G401 (cell line): ENCODE measurements at regions of chr10 and their contacts with region 1.

Region 1: DNA sequence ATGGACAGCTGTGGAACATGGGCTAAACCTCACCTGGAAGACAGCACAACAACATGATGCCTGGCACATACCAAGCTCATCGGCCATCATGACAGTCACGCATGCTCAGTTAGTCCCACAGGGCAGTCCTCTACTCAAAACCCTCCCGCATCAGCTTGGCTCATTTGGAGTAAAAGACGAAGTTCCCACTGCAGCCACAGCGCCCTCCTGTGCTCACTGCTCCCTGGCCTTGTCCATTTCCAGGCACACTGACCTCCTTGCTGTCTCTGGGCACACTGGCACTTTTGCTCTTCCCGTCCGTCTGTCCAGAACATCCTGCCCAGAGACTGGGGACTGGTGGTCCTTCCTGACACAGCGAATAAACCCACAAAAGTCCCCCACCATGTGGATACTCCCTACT is 66.2 kb downstream of the LARP4B start:
- DNase-seq: no peak

Region 2: DNA sequence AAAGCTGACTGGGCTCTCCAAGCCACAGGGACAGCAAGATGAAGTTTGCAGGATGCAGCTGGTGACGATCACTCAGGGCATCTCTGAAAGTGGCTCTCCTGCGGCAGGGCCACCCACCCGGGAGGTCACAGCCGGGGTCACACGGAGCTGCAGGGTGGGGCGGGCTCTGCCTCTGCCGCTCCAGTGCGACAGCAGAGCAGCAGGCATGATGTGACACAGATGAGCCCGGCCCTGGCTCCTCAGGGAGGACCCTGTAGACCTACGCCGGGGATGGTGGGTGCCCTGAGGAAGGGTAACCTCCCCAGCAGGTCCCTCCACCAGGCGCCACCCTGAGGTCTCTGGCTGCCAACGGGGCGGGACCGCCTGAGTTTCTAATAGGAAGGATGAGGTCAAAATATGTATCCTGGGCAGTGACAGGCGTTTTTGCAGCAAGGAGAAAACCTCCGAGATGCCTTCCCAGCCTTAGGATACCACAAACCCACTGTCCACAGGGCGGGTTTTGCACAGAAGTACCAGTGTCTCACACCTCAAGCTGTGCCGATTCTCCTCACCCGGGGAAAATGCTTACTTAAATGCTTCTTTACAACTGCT is 61.0 kb before region 1 on chr10:
- in situ Hi-C with region 1: loop called (anchors 10 kb)
- DNase-seq: no peak

Region 3: DNA sequence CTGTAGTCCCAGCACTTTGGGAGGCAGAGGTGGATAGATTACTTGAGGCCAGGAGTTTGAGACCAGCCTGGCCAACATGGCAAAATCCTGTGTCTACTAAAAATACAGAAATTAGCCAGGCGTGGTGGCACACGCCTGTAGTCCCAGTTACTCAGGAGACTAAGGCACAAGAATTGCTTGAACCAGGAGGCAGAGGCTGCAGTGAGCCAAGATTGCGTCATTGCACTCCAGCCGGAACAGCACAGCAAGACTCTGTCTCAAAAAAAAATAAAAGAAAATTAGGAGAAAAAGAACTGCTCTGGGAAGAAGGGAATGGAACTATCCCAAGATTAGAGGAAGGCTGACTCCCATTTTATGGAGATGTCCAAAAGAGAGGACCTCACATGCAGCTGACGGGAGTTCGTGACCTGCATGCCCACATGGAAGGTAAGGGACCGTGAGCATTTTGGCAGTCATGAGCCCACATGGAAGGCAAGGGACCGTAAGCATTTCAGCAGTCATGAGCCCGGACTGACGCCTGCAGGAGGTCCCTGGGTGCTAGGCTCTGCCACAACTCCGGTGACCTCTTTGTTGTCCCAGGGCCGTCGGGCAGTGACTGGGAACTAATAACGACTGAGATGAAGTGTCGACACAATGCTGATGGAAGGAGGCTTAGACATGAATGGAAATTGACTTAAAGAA is 104.4 kb after region 1 on chr10:
- in situ Hi-C with region 1: loop called (anchors 5 kb)
- DNase-seq: no peak